Activated CD4-positive, alpha-beta memory T cell treated with anti-CD3 and anti-CD28 coated beads for 36 hours (primary cell): ENCODE measurements at regions of chr15 and their contacts with region 1.

Region 1: GRCh38 chr15:64247906-64248541 is 85.2 kb upstream of the PPIB start:
- DNase-seq: peak; percentile 29
- H3K4me3 Mint-ChIP-seq: no peak overlapping the region
- H3K27ac Mint-ChIP-seq: no peak overlapping the region
- H3K4me1 Mint-ChIP-seq: peaks cover 40% of the 10 kb centered on the region
- H3K27me3 Mint-ChIP-seq: peaks cover 2% of the 10 kb centered on the region

Region 2: DNA sequence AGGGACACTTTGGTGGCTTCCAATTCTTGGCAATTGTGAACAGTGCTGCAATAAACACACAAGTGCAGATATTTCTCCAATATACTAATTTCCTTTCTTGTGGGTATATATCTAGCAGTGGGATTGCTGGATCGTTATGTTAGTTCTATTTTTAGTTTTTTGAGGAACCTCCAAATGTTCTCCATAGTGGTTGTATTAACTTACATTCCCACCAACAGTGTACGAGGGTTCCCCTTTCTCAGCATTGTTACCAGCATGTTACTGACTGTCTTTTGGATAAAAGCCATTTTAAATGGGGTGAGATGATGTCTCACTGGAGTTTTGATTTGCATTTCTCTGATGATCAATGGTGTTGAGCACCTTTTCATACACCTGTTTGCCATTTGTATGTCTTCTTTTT is 294.5 kb before region 1 on chr15:
- CTCF ChIA-PET with region 1: no interaction called
- POLR2A ChIA-PET with region 1: no interaction called
- intact Hi-C with region 1: no loop called
- DNase-seq: no peak
- H3K4me3 Mint-ChIP-seq: no peak overlapping the region
- H3K27ac Mint-ChIP-seq: no peak overlapping the region
- H3K4me1 Mint-ChIP-seq: no peaks in the 10 kb centered on the region
- H3K27me3 Mint-ChIP-seq: no peaks in the 10 kb centered on the region

Region 3: GRCh38 chr15:64222573-64223366 is 25.3 kb before region 1 on chr15:
- CTCF ChIA-PET with region 1: no interaction called
- POLR2A ChIA-PET with region 1: interaction called, 14 read pairs
- intact Hi-C with region 1: loop called (anchors 2 kb)
- DNase-seq: no peak
- H3K4me3 Mint-ChIP-seq: no peak overlapping the region
- H3K27ac Mint-ChIP-seq: no peak overlapping the region
- H3K4me1 Mint-ChIP-seq: peaks cover 21% of the 10 kb centered on the region
- H3K27me3 Mint-ChIP-seq: no peaks in the 10 kb centered on the region

Region 4: GRCh38 chr15:64263567-64263966 is 15.5 kb after region 1 on chr15:
- CTCF ChIA-PET with region 1: no interaction called
- POLR2A ChIA-PET with region 1: interaction called, 3 read pairs
- intact Hi-C with region 1: loop called (anchors 1 kb)
- DNase-seq: no peak
- H3K4me3 Mint-ChIP-seq: no peak overlapping the region
- H3K27ac Mint-ChIP-seq: no peak overlapping the region
- H3K4me1 Mint-ChIP-seq: peaks cover 37% of the 10 kb centered on the region
- H3K27me3 Mint-ChIP-seq: no peaks in the 10 kb centered on the region